Pancreas (tissue), 10 donors: ENCODE measurements at regions of chr12 and their contacts with region 1.

Region 1: DNA sequence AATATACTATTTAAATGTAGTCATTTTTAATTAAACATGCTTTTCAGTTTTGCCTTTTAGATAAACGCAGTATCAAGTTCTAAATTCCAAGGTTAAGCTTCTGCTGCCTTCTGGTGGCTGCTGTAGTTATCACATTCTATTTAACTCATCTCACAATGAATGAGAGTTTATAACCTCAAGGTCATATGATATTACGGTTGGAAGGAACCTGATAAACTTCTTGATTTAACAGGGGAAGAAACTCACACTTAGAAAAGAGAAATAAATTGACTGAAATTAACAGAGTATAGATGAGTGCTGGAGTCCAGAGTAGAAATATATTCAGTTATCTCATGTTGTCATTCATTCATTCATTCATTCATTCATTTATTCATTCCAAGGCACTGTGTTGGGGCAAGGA is 31.9 kb downstream of the GUCY2C start:
- DNase-seq: peak in 2 of 6 donors; percentile 21 to 45
- ATAC-seq: peak; percentile 69 to 96 (median 90)
- H3K4me3 ChIP-seq: no peak overlapping the region
- H3K27ac ChIP-seq: no peak overlapping the region
- H3K4me1 ChIP-seq: no peaks in the 10 kb centered on the region
- H3K27me3 ChIP-seq: no peaks in the 10 kb centered on the region
- CTCF ChIP-seq: peak; percentile 38 to 50 (median 46)

Region 2: DNA sequence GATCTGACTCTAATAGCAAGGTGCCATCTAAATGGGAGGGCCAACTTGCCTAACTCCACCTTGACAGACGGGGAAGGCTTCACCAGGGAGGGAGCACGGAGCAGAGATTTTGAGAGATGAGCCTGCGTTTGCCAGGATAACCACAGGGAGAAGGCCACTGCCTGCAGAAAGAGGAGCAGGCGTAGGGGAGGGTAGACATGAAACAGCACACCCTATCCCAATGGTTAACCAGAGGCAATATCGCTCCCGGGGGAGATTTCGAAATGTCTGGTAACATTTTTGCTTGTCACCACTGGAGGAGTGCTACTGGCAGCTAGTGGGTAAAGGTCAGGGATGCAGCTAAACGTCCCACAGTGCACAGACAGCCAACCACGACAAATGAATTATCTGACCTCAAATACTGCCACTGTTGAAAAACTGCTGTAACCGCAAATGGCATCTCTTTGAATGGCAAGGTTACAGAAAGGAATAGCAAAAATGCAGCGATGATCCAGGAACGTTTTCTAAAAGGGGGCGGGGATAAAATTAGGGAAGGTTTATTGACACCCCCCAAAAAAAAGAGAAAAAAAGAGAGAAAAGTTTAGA is 425.1 kb before region 1 on chr12:
- intact Hi-C with region 1: loop called in 2 of 3 experiments (anchors 10 kb)
- DNase-seq: peak in 3 of 6 donors; percentile 12 to 33 (median 32)
- ATAC-seq: peak; percentile 62 to 84 (median 68)
- H3K4me3 ChIP-seq: no peak overlapping the region
- H3K27ac ChIP-seq: peak overlapping the region in 2 of 4 donors; percentile 46 to 56
- H3K4me1 ChIP-seq: peaks cover 0 to 4% (median 0%) of the 10 kb centered on the region in 3 donors
- H3K27me3 ChIP-seq: no peaks in the 10 kb centered on the region
- CTCF ChIP-seq: no peak

Region 3: DNA sequence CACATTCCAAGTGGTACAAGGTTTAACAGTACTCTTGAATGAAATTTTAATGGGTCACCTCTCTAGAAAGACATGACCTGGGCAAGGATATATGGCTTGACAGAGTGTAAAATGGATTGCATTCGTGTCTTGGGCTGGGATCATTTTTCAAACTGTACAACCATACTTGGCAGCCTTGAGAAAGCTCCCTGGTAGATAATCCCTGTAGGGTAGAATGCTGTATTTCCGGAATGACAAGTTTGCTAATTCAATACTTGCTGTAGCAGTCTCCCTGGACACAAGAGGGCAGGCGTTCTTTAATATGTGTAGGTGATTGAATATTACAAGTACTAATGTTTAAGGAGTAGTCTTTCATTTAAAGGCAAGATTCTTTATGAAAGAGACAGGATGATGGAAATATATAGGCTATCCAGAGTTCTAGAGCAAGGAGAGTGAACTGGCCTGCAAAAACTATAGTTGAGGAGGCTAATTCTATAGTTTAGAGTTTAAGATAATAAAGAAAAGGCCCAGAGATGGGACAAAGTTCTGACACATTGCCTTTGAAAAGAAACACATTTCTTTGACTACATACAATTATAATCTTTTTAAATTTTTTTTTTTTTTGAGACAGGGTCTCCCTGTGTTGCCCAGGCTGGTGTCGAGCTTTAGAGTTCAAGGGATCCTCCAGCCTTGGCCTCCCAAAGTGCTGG is 150.2 kb before region 1 on chr12:
- intact Hi-C with region 1: loop called in 1 of 3 experiments (anchors 10 kb)
- DNase-seq: peak in 4 of 6 donors; percentile 46 to 76 (median 72)
- ATAC-seq: peak; percentile 99 to 100 (median 100)
- H3K4me3 ChIP-seq: no peak overlapping the region
- H3K27ac ChIP-seq: peak overlapping the region in 2 of 4 donors; percentile 8 to 51
- H3K4me1 ChIP-seq: peaks cover 0 to 6% (median 4%) of the 10 kb centered on the region in 3 donors
- H3K27me3 ChIP-seq: no peaks in the 10 kb centered on the region
- CTCF ChIP-seq: peak; percentile 35 to 63 (median 50)